Mucosa of descending colon (tissue), 3 donors: ENCODE measurements at regions of chr12 and their contacts with region 1.

Region 1: DNA sequence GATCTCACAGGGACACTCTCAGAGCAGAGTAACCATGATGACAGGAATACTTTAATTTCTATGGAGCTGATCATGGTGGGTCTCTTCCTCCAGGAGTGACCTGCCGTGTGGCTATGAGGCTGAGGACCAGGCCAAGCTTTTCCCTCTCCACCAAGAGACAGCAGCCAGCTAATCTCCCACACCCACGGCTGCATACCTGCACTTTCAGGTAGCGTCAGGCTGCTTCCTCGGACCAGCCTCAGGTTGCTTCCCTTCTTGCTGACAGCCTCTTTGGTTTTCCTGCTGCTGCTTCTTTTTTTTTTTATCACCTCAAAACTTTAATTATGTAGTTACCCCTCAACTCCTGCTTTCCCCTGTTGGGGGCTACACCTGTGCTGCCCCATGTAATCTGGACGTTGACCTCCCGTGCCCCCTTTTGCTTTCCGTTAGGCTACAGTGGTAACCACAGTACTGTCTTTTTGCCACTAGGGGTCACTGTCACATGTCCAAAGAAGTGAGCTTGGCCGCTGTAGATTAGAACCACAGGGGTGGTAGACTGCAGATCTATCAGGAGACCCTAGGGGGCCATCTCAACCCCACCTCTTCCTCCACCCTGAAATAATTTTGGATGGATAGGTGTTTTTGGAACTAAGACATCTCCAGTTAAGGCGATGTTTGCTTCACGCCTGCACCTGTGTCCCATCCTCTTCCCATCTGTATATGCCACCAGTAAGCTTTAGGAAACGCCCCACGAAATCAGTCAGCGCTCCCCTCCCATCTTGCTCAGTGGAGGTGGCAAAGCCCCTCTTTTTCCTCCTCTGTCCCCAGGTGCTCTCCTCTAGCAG is 7.8 kb upstream of the PIP4K2C start:
- DNase-seq: peak in 1 of 3 donors; percentile 80
- ATAC-seq: peak; percentile 93
- H3K4me3 ChIP-seq: no peak overlapping the region
- H3K4me1 ChIP-seq: no peaks in the 10 kb centered on the region
- CTCF ChIP-seq: peak; percentile 77

Region 2: GRCh38 chr12:57621497-57622292 is 38.5 kb after region 1 on chr12:
- intact Hi-C with region 1: loop called (anchors 5 kb)
- DNase-seq: peak in 2 of 3 donors; percentile 71 to 72
- ATAC-seq: peak; percentile 75
- H3K4me3 ChIP-seq: no peak overlapping the region
- H3K4me1 ChIP-seq: peaks cover 11% of the 10 kb centered on the region
- CTCF ChIP-seq: peak; percentile 86